ENCODE measurements at regions of chr4 and their contacts with region 1.

Region 1: DNA sequence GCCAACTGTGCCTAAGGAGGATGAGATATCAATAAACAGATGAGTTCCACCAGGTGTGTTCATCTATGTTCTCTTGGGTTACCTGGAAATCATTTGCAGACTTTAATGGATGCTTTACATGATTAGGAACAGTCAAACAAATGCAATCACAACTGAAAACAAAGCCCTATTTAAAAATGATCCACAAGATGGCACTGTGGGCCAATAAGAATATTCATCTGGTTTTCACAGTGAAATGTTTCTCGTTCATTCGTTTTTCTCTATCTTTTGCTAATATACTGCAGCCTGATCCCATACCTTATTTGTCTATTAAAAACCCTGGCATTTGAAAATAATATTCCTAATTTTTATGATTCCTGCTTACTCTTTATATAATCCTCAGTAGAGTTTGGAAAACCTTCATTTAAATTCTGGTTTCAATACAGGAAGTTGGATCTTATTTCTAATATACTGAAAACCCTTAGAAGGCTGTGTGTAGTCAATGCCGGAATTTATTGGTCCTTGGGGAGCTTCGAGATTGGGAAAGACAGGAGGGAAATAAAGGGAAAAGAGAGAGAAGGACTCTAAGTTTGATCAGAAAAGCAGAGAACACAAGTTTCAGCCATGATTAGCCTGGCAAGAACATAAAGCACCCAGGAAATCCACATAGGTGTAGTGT is 63.8 kb upstream of the TAPT1 start:
- DNase-seq: no peak
- ATAC-seq: peak; percentile 30
- H3K4me3 Mint-ChIP-seq: no peak overlapping the region
- H3K27ac Mint-ChIP-seq: no peak overlapping the region
- H3K4me1 Mint-ChIP-seq: peaks cover 4% of the 10 kb centered on the region
- H3K27me3 Mint-ChIP-seq: peaks cover 2% of the 10 kb centered on the region

Region 2: DNA sequence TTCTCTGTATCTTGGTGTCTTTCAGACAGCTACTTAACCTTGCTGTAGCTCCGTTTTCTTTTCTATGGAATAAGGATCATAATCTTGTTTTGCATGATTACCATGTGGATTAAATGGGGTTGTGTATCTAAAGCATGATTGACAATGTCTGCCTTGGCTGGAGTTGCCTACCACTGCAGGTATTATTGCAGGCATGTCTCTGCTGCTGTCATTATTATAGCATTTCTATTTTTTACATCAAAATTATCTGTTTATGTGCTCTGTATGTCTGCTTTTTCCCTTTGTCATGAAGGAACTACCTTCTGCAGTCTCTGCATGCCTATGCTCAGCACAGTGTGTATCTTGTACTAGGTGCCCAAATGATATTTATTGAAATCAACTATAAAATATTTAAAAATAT is 32.2 kb after region 1 on chr4:
- CTCF ChIA-PET with region 1: no interaction called
- DNase-seq: no peak
- ATAC-seq: no peak
- H3K4me3 Mint-ChIP-seq: no peak overlapping the region
- H3K27ac Mint-ChIP-seq: no peak overlapping the region
- H3K4me1 Mint-ChIP-seq: no peaks in the 10 kb centered on the region
- H3K27me3 Mint-ChIP-seq: peaks cover 4% of the 10 kb centered on the region

Region 3: GRCh38 chr4:16443504-16444088 is 153.6 kb after region 1 on chr4:
- CTCF ChIA-PET with region 1: interaction called, 12 read pairs
- DNase-seq: no peak
- ATAC-seq: no peak
- H3K4me3 Mint-ChIP-seq: no peak overlapping the region
- H3K27ac Mint-ChIP-seq: no peak overlapping the region
- H3K4me1 Mint-ChIP-seq: no peaks in the 10 kb centered on the region
- H3K27me3 Mint-ChIP-seq: no peaks in the 10 kb centered on the region

Measured in activated CD8-positive, alpha-beta memory T cell treated with anti-CD3 and anti-CD28 coated beads, Interleukin-2, amount 10 ng/mL, durations not matched to agents 7 days and 5 days (primary cell).